Activated CD8-positive, alpha-beta T cell treated with anti-CD3 and anti-CD28 coated beads, Interleukin-2, amount 10 ng/mL, durations not matched to agents 7 days and 5 days (primary cell): ENCODE measurements at regions of chr6 and their contacts with region 1.

Region 1: DNA sequence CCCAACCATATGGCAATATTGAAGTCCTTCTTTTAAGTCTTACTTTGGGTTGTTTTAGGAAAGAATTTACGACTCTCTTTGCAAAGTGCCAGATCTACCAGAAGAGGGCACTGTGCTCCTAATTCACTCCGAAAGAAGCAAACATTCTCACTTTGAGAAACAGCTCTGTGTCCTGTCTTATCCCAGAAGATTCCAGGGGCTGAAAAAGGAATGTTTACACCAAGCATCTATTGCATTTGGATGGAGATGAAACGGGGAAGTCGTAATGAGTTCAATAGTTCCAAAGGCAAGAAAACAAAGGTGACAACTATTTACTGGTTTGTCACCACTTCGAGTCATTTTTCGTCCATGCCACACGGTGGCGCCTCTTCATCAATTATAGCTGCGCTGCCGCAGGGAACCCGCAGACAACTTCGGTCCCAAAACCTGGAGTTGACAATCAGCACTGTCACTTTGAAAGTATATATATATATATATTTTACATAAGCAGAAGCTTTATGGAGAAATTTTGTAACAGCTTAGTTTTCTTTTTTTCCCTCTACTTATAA is 121.6 kb downstream of the MOXD1 start:
- DNase-seq: peak; percentile 80
- ATAC-seq: peak; percentile 84
- H3K4me3 Mint-ChIP-seq: peak overlapping the region; percentile 68
- H3K27ac Mint-ChIP-seq: no peak overlapping the region
- H3K4me1 Mint-ChIP-seq: no peaks in the 10 kb centered on the region
- H3K27me3 Mint-ChIP-seq: peaks cover 9% of the 10 kb centered on the region

Region 2: GRCh38 chr6:132259070-132259469 is 20.6 kb before region 1 on chr6:
- CTCF ChIA-PET with region 1: interaction called, 17 read pairs
- POLR2A ChIA-PET with region 1: no interaction called
- DNase-seq: no peak
- ATAC-seq: no peak
- H3K4me3 Mint-ChIP-seq: no peak overlapping the region
- H3K27ac Mint-ChIP-seq: no peak overlapping the region
- H3K4me1 Mint-ChIP-seq: no peaks in the 10 kb centered on the region
- H3K27me3 Mint-ChIP-seq: peaks cover 9% of the 10 kb centered on the region

Region 3: DNA sequence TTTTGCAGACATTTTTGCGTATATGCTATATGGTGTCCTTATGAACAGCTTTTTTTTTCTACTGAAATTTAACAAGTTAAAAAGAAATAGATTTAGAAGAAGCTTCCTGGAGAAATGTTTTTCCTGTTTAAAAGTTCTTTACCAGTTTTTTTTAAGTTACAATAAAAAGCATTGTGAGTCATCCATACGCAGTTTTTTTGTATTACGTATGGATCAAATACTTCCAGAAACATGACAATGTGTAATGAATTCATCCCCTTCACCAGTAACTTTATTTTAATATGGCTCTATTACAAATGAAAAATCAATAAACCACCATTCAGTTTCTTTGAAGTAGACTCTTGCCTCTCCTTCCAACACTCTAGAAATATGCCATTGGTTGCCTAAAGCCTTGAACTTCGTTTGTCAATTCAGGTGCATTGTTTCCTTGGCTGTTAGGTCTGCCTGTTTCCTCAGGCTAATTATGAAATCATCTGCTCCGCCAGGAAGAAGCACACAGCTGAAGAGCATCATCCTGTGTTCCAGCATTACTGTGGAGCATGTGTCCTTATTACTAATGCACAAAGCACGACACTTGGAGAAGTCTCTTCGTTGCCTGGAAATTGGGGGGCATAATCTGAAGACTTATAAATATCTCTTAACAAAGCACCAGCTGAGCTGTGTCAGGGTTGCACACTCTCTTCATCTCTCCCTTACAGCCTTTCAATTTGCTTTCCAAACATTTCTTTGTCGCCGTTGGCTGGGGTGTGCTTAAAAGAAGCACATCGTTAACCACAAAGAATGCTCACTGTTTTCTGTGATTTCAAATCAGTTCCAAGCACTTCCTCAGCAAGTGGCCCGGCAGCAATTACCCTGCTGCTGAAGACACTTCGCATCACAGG is 112.0 kb after region 1 on chr6:
- CTCF ChIA-PET with region 1: interaction called, 17 read pairs
- POLR2A ChIA-PET with region 1: no interaction called
- DNase-seq: no peak
- ATAC-seq: no peak
- H3K4me3 Mint-ChIP-seq: no peak overlapping the region
- H3K27ac Mint-ChIP-seq: no peak overlapping the region
- H3K4me1 Mint-ChIP-seq: no peaks in the 10 kb centered on the region
- H3K27me3 Mint-ChIP-seq: peaks cover 17% of the 10 kb centered on the region

Region 4: DNA sequence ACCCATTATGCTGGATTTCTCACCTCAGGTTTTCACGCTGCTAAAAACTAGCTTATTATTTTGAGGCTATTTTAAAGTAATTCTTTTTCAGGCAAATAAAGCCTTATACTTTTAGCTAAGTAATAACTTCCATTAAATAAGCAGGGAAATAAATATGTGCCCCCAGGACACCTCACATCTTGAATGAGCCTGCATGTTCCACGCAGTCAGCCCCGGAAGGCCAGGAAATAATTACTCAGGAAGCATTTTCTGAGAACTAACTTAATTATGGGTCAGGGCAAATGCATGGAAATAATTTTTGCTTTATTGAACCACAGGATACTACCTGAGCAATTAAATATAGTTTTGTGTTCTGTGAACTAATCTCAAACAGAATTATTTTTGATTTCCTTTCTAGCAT is 192.1 kb after region 1 on chr6:
- CTCF ChIA-PET with region 1: interaction called, 25 read pairs
- POLR2A ChIA-PET with region 1: no interaction called
- DNase-seq: no peak
- ATAC-seq: no peak
- H3K4me3 Mint-ChIP-seq: no peak overlapping the region
- H3K27ac Mint-ChIP-seq: no peak overlapping the region
- H3K4me1 Mint-ChIP-seq: no peaks in the 10 kb centered on the region
- H3K27me3 Mint-ChIP-seq: no peaks in the 10 kb centered on the region

Region 5: DNA sequence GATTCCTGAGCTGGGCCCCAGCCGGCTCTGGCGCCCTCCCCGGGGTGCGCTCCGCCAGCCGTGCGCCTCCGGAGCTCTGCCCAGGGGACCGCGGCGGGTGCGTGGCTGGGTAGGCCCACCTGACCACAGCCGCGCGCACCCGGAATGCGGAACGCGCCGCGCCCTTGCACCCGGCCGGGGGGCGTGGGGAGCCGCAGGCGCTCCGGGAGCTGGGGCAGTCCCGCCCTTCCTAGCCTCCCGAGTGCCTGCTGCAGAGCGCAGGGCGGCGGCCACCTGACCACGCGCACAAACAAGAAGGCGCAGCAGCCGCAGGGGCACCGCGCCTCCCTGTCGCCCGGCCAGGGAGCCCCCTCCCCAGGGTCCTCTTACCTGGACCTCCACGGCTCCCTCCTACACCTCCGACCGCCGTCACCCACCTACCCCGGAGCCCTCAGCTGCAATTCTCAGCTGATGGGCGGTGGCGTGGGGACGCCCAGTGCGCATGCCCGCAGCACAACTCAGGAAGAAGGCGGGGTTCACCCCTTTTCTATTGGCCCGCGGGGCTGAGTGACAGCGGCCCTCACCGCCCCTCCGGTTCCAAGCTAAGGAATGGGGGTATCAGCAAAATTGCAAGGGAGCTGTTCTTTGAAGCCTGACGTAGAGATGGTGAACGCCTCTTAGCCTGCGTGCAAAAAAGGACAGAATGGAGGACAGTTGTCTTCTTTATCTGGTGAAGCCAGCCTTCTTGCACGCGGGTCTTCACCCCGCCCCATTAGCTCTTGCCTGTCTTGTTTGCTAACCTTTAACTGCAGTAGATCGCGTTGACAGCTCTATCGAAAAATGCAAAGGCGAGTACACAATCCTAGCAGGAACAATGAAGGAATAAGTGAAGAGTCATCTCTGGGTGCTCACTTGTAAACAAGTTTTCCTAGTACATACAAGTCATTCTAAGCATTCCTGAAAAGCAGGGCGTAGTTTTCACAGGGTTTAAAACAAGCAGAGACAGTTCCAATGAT is 233.3 kb after region 1 on chr6 and contains the start of gene STX7:
- CTCF ChIA-PET with region 1: interaction called, 12 read pairs
- POLR2A ChIA-PET with region 1: no interaction called
- DNase-seq: peak; percentile 89
- ATAC-seq: peak; percentile 97
- H3K4me3 Mint-ChIP-seq: peak within 1 kb of the TSS; percentile 94
- H3K27ac Mint-ChIP-seq: peak within 1 kb of the TSS; percentile 89
- H3K4me1 Mint-ChIP-seq: peaks cover 25% of the 10 kb centered on the region
- H3K27me3 Mint-ChIP-seq: peaks cover 15% of the 10 kb centered on the region
- total RNA-seq, gene STX7: 16.0 to 16.4 TPM